Calu3 (cell line): ENCODE measurements at regions of chr14 and their contacts with region 1.

Region 1: DNA sequence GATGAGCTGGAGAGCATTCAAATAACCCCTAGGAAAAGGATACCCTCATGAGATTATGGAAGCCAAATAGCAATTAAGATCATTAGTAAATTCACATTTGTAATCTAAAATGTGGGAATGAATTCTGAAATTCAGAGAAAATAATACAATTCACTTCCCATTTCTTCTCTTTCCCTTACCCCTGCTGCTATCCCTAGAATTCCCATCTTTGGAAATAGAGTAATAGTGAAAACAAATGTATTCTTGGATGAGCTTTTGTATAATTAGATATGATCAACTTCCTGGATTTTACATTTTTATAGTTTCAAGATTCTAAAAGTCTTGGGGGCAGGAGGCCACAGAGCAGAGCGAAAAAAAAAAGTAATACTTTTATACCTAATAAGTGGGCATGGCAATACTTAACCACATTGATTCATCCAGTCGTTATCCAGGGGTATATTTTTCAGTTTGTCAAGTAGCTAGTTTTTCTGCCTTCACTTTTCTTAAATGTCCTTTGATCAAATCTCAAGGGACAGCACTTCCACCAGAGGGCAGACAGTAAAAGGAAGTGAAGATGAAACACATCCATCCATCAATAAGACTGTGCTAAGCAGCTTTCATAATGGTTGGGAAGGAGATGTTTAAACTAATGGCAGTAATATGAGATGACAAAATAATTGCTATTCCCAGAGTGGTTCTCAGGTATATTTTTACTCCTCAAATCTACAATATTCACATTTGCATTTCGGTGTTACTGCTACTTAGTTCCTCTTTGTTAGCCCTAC is 401.3 kb downstream of the DIO2 start:
- DNase-seq: peak; percentile 30
- H3K4me3 Mint-ChIP-seq: no peak overlapping the region
- H3K27ac Mint-ChIP-seq: no peak overlapping the region
- H3K4me1 Mint-ChIP-seq: peaks cover 1% of the 10 kb centered on the region
- H3K27me3 Mint-ChIP-seq: no peaks in the 10 kb centered on the region
- CTCF ChIP-seq: peak; percentile 31

Region 2: DNA sequence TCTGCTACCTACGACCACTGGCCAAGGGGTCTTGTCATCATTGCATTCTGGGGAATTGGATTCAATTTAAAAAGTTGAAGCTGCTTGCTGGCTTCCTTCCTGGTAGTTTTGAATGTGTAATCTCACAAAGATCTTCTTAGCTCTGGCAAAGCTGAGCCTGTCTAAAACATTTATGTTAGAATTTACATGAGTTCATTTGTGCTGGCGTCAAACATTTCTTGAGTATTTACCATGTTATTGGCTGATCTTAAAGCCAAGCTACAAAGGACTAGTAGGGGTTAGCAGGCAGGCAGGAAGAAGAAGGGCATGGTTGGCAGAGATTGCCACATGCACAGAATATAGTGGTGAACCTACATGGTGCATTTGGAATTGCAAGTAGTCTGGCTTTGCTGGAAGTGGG is 43.5 kb before region 1 on chr14:
- CTCF ChIA-PET with region 1: no interaction called
- intact Hi-C with region 1: no loop called
- DNase-seq: no peak
- H3K4me3 Mint-ChIP-seq: no peak overlapping the region
- H3K27ac Mint-ChIP-seq: no peak overlapping the region
- H3K4me1 Mint-ChIP-seq: no peaks in the 10 kb centered on the region
- H3K27me3 Mint-ChIP-seq: no peaks in the 10 kb centered on the region
- CTCF ChIP-seq: no peak

Region 3: DNA sequence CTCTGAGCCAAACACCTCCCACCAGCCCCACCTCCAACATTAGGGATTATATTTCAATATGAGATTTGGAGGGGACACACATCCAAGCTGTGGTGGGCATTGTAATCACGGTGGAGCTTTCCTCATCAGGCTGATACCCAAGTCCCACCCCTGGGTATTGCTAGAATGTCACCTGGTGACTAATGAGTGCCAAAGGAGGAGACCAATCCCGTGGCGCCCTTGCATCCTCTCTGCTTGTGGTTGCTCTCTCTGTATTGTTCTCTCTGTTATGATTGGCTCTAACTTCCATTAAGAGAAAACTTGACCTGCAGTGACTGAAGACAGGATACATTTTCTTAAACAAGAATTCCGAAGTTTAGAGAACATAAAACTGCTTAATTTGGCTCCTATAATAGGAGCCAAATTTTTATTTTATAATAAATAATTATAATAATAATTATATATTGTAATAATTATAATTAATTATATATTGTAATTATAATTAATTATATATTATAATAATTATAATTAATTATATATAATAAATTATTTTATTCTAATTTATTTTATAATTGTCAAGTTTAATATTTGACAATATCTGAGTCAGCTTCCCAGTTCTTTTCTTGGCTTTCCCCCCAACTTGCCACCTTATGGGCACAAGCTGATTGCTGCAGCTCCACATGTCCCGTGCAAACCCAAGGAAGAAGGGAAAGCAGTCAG is 18.8 kb before region 1 on chr14:
- CTCF ChIA-PET with region 1: no interaction called
- intact Hi-C with region 1: no loop called
- DNase-seq: no peak
- H3K4me3 Mint-ChIP-seq: no peak overlapping the region
- H3K27ac Mint-ChIP-seq: no peak overlapping the region
- H3K4me1 Mint-ChIP-seq: no peaks in the 10 kb centered on the region
- H3K27me3 Mint-ChIP-seq: no peaks in the 10 kb centered on the region
- CTCF ChIP-seq: no peak

Region 4: GRCh38 chr14:80037349-80037748 is 227.3 kb after region 1 on chr14:
- CTCF ChIA-PET with region 1: no interaction called
- intact Hi-C with region 1: loop called (anchors 1 kb)
- DNase-seq: no peak
- H3K4me3 Mint-ChIP-seq: no peak overlapping the region
- H3K27ac Mint-ChIP-seq: no peak overlapping the region
- H3K4me1 Mint-ChIP-seq: no peaks in the 10 kb centered on the region
- H3K27me3 Mint-ChIP-seq: no peaks in the 10 kb centered on the region
- CTCF ChIP-seq: no peak